ENCODE measurements at regions of chr20 and their contacts with region 1.

Region 1: GRCh38 chr20:47785854-47786764 is 828 bp upstream of the SULF2 start:
- DNase-seq: peak; percentile 78 to 86 (median 82)
- H3K4me3 ChIP-seq: peak overlapping the region; percentile 55
- H3K27ac ChIP-seq: peak overlapping the region; percentile 83 to 92
- H3K4me1 ChIP-seq: peaks cover 10% of the 10 kb centered on the region
- H3K27me3 ChIP-seq: no peaks in the 10 kb centered on the region
- CTCF ChIP-seq: peak in 2 of 3 donors; percentile 78 to 83
- EP300 ChIP-seq: no peak
- POLR2A ChIP-seq: no peak

Region 2: DNA sequence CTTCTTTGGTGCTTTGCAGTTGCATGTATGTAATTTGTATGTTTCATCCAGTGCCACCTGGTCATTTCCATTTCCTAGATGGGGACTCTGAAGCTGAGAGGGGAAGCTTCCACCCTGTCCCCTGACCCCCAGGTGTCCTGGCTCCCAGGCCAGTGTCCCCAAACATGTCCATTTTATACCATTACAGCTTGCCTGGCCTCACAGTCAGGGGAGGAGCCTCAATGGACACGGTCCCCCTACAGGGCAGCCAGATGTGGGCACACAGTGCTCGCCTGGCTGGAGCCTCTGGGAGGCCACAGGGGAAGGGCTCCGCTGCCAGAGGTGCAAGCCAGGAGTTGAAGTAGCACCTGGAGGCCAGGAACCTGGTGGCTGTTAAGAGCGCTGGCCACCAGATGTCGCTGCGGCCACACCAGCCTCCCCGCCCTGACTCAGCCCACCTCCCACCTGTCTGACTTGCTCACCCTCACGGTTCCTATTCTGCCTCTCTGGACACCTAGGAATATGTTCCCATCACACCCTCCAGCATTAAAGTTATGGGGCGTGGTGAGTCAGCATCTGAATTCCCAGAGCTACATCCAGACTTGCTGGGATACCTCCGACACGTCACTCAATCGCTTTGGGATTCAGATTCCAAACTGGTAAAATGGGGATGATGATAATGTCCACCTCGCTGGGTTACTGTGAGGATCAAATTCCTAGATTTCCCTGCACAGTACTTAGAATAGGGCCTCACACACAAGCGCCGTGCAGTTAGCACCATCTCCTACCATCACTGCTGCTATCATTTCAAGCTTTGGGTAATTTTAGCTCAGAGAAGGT is 108.3 kb before region 1 on chr20:
- intact Hi-C with region 1: loop called in 2 of 4 experiments (anchors 5 to 10 kb)
- DNase-seq: peak in 4 of 5 donors; percentile 39 to 68 (median 64)
- H3K4me3 ChIP-seq: no peak overlapping the region
- H3K27ac ChIP-seq: no peak overlapping the region
- H3K4me1 ChIP-seq: peaks cover 7% of the 10 kb centered on the region
- H3K27me3 ChIP-seq: no peaks in the 10 kb centered on the region
- CTCF ChIP-seq: peak; percentile 40 to 70 (median 56)
- EP300 ChIP-seq: no peak
- POLR2A ChIP-seq: no peak

Region 3: GRCh38 chr20:47725248-47725973 is 60.7 kb before region 1 on chr20:
- intact Hi-C with region 1: loop called in 1 of 4 experiments (anchors 10 kb)
- DNase-seq: peak; percentile 66 to 78 (median 76)
- H3K4me3 ChIP-seq: no peak overlapping the region
- H3K27ac ChIP-seq: no peak overlapping the region
- H3K4me1 ChIP-seq: peaks cover 8% of the 10 kb centered on the region
- H3K27me3 ChIP-seq: no peaks in the 10 kb centered on the region
- CTCF ChIP-seq: peak; percentile 74 to 89 (median 81)
- EP300 ChIP-seq: no peak
- POLR2A ChIP-seq: no peak

Region 4: GRCh38 chr20:48295445-48295963 is 509.4 kb after region 1 on chr20:
- intact Hi-C with region 1: loop called in 3 of 4 experiments (anchors 5 to 10 kb)
- DNase-seq: peak in 1 of 5 donors; percentile 49
- H3K4me3 ChIP-seq: no peak overlapping the region
- H3K27ac ChIP-seq: no peak overlapping the region
- H3K4me1 ChIP-seq: peaks cover 10% of the 10 kb centered on the region
- H3K27me3 ChIP-seq: no peaks in the 10 kb centered on the region
- CTCF ChIP-seq: peak in 2 of 3 donors; percentile 38 to 45
- EP300 ChIP-seq: no peak
- POLR2A ChIP-seq: no peak

Region 5: GRCh38 chr20:48620519-48621254 is 834.6 kb after region 1 on chr20:
- intact Hi-C with region 1: loop called in 3 of 4 experiments (anchors 5 kb)
- DNase-seq: peak; percentile 90 to 97 (median 95)
- H3K4me3 ChIP-seq: peak overlapping the region; percentile 25
- H3K27ac ChIP-seq: peak overlapping the region; percentile 1 to 44
- H3K4me1 ChIP-seq: peaks cover 11% of the 10 kb centered on the region
- H3K27me3 ChIP-seq: no peaks in the 10 kb centered on the region
- CTCF ChIP-seq: peak; percentile 87 to 96 (median 91)
- EP300 ChIP-seq: no peak
- POLR2A ChIP-seq: no peak

Measured in ovary (tissue), 10 donors.